Spleen (tissue), 13 donors: ENCODE measurements at regions of chr5 and their contacts with region 1.

Region 1: GRCh38 chr5:132007399-132008165 is 3.9 kb downstream of the ACSL6 start:
- DNase-seq: peak; percentile 81
- H3K4me3 ChIP-seq: no peak overlapping the region
- H3K27ac ChIP-seq: no peak overlapping the region
- H3K4me1 ChIP-seq: peaks cover 0 to 33% (median 17%) of the 10 kb centered on the region in 6 donors
- H3K27me3 ChIP-seq: peaks cover 5 to 47% (median 19%) of the 10 kb centered on the region in 7 donors
- CTCF ChIP-seq: peak; percentile 31 to 86 (median 77)
- POLR2A ChIP-seq: no peak

Region 2: GRCh38 chr5:131423056-131423455 is 584.5 kb before region 1 on chr5:
- intact Hi-C with region 1: loop called (anchors 10 kb)
- DNase-seq: no peak
- H3K4me3 ChIP-seq: no peak overlapping the region
- H3K27ac ChIP-seq: no peak overlapping the region
- H3K4me1 ChIP-seq: no peaks in the 10 kb centered on the region
- H3K27me3 ChIP-seq: no peaks in the 10 kb centered on the region
- CTCF ChIP-seq: peak in 6 of 11 experiments; percentile 29 to 50 (median 37)
- POLR2A ChIP-seq: no peak

Region 3: DNA sequence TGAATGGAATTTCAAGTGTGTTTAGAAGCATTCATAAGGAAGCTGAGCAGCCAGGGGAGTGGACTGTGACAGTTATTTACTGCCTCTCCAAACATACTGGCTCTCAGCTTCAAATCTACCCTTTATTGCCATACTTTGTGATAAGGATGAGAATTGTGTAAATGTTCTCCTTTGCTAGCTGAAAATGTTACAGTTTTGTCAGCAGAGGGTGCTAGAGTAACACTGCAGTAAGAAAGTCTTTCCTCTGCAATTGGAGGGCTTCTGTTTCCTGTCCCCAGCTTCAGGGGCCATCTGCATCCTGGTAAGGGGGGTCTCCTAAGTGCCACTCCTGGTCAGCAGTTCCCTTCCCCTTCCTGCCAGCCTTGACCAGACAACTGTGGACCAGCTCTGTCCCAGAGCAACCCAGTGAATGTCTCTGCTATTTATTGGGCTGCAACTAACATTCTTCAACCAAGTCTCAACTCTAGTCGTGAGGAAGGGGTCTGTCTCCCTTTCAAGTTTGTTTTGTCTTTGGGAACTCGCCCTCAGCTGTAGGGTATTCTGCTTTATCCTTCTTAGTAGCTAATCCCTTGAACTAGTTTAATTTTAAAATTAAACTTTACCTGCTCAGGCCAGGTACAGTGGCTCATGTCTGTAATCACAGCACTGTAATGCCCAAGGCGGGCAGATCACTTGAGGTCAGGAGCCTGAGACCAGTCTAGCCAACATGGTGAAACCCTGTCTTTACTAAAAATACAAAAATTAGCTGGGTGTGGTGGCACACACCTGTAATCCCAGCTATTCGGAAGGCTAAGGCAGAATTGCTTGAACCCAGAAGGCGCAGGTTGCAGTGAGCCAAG is 417.9 kb before region 1 on chr5:
- intact Hi-C with region 1: loop called (anchors 5 kb)
- DNase-seq: no peak
- H3K4me3 ChIP-seq: no peak overlapping the region
- H3K27ac ChIP-seq: peak overlapping the region in 4 of 8 donors; percentile 7 to 39 (median 29)
- H3K4me1 ChIP-seq: peaks cover 4 to 35% (median 23%) of the 10 kb centered on the region in 6 donors
- H3K27me3 ChIP-seq: no peaks in the 10 kb centered on the region
- CTCF ChIP-seq: peak; percentile 47 to 87 (median 74)
- POLR2A ChIP-seq: no peak